Transverse colon (tissue), 4 donors: ENCODE measurements at regions of chr12 and their contacts with region 1.

Region 1: DNA sequence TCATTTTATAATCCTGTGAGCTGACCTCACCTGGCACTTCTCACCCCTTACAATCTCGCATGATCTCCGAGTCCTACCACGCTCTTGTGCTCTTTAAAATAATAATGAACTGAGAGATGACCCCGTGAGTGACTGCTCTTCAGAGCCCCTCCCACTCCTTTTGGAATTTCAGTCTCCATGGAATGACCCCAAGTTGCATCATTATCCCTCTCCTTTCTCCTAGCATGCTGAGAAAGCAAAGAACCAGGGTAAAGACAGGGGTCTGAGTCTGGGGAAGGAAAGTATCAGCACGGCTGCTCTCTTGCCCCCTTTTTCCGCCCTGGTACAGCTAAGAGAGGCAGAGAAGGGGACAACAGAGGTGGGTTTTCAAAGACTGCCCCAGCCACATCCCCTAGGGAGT is 178.3 kb upstream of the PLEKHA5 start:
- DNase-seq: no peak
- H3K4me3 ChIP-seq: no peak overlapping the region
- H3K27ac ChIP-seq: no peak overlapping the region
- H3K4me1 ChIP-seq: no peaks in the 10 kb centered on the region
- H3K27me3 ChIP-seq: no peaks in the 10 kb centered on the region
- CTCF ChIP-seq: no peak
- EP300 ChIP-seq: no peak
- POLR2A ChIP-seq: no peak

Region 2: GRCh38 chr12:19841451-19841850 is 890.2 kb after region 1 on chr12:
- in situ Hi-C with region 1: no loop called
- intact Hi-C with region 1: loop called (anchors 5 kb)
- DNase-seq: no peak
- H3K4me3 ChIP-seq: no peak overlapping the region
- H3K27ac ChIP-seq: peak overlapping the region in 1 of 4 donors; percentile 5
- H3K4me1 ChIP-seq: no peaks in the 10 kb centered on the region
- H3K27me3 ChIP-seq: no peaks in the 10 kb centered on the region
- CTCF ChIP-seq: no peak
- EP300 ChIP-seq: no peak
- POLR2A ChIP-seq: no peak